Panc1 (cell line): ENCODE measurements at regions of chr11 and their contacts with region 1.

Region 1: GRCh38 chr11:14258221-14258935 is 100.6 kb downstream of the RRAS2 start:
- DNase-seq: peak; percentile 32
- ATAC-seq: peak; percentile 47
- H3K4me3 ChIP-seq: no peak overlapping the region
- H3K27ac ChIP-seq: no peak overlapping the region
- H3K4me1 ChIP-seq: no peaks in the 10 kb centered on the region
- H3K27me3 ChIP-seq: no peaks in the 10 kb centered on the region
- CTCF ChIP-seq: no peak

Region 2: GRCh38 chr11:13759050-13759449 is 499.3 kb before region 1 on chr11:
- CTCF ChIA-PET with region 1: no interaction called
- POLR2A ChIA-PET with region 1: no interaction called
- in situ Hi-C with region 1: no loop called
- intact Hi-C with region 1: loop called (anchors 5 kb)
- DNase-seq: no peak
- ATAC-seq: no peak
- H3K4me3 ChIP-seq: no peak overlapping the region
- H3K27ac ChIP-seq: no peak overlapping the region
- H3K4me1 ChIP-seq: no peaks in the 10 kb centered on the region
- H3K27me3 ChIP-seq: no peaks in the 10 kb centered on the region; the same call in 1 of the 2 replicates
- CTCF ChIP-seq: no peak